Lower leg skin (tissue), 4 donors: ENCODE measurements at regions of chr6 and their contacts with region 1.

Region 1: DNA sequence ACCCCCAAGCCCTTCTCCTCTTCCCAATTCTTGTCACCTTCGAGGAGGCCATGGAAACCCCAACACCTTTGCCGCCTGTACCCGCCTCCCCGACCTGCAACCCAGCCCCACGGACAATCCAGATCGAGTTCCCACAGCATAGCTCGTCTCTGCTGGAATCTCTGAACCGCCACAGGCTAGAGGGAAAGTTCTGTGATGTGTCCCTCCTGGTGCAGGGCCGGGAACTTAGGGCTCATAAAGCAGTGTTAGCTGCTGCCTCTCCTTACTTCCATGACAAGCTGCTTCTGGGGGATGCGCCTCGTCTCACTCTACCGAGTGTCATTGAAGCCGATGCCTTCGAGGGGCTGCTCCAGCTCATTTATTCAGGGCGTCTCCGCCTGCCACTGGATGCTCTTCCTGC is 675 bp downstream of the ZBTB9 start:
- DNase-seq: peak in 1 of 2 donors; percentile 80
- H3K4me3 ChIP-seq: peak overlapping the region; percentile 60
- CTCF ChIP-seq: no peak
- POLR2A ChIP-seq: no peak

Region 2: DNA sequence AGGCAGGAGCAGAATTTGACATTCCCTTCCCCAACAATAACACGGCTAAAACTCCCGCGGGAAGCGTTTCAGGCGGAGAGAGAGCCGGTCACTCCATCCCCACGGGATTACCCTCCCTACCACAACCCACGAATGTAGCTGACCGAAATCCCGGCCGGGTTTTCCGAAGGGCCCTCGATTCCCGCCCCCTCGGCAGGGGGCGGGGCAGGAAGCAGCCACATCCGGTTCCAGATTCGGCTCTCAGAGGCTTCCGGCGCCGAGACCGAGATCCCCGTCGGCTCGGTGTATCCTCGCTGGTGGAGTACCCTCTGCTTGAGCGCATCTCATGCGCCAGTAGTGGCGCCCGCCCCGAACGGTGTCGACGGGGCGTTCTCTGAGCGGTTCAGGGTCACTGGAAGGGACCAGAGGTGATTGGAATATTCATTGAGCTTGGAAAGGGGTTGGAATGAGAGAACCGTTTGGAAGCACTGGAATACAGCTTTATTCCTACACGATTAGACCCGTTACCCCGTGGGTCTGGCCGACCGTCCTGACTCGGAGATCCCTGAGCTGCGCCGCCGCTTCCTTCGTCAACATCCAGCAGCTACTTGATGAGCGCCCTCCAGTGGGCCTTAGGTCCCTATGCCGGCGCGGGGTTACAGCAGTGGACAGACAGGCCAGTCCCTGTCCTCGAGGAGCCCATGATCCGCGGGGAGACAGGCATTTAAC is 155.7 kb before region 1 on chr6:
- intact Hi-C with region 1: no loop called
- DNase-seq: peak; percentile 90 to 97
- H3K4me3 ChIP-seq: peak overlapping the region; percentile 76
- CTCF ChIP-seq: peak in 1 of 3 donors; percentile 44
- POLR2A ChIP-seq: peak in 1 of 2 donors; percentile 64

Region 3: DNA sequence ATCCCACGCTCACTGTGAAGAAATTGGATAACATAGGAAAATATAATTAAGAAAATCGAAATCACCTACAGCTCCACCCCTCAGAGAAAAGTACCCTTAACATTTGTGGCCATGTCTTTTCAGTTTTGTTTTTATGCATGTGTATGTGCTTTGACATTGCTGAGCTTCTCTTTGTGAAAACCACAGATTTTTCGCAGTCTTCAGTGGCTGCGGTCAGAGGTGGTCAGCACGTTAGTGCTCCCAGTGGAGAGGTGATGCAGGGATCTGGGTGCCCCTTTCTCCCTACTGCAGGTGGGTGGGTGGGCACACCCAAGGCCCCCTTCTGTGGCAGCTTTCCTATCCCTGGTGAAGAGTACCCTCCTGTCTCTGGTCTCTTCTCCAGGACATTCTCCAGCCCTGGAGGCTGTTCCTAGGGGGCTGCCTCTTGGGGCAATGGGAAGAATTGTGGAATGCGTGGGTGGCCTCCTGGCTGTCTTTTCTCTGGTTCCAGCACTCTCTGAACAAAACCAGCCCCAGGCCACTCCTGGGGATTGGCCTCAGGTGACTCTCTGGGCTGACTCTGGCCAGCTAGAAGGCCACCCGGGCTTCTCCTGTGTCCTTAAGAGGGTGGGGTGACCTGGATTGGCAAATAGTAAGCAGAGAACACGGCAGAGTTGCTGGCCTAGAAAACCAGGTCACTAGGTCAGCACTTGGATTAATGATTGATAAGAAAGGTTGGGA is 1947.2 kb after region 1 on chr6:
- intact Hi-C with region 1: loop called (anchors 5 kb)
- DNase-seq: no peak
- H3K4me3 ChIP-seq: no peak overlapping the region
- CTCF ChIP-seq: no peak
- POLR2A ChIP-seq: no peak